GM13977 (cell line): ENCODE measurements at regions of chr3 and their contacts with region 1.

Region 1: DNA sequence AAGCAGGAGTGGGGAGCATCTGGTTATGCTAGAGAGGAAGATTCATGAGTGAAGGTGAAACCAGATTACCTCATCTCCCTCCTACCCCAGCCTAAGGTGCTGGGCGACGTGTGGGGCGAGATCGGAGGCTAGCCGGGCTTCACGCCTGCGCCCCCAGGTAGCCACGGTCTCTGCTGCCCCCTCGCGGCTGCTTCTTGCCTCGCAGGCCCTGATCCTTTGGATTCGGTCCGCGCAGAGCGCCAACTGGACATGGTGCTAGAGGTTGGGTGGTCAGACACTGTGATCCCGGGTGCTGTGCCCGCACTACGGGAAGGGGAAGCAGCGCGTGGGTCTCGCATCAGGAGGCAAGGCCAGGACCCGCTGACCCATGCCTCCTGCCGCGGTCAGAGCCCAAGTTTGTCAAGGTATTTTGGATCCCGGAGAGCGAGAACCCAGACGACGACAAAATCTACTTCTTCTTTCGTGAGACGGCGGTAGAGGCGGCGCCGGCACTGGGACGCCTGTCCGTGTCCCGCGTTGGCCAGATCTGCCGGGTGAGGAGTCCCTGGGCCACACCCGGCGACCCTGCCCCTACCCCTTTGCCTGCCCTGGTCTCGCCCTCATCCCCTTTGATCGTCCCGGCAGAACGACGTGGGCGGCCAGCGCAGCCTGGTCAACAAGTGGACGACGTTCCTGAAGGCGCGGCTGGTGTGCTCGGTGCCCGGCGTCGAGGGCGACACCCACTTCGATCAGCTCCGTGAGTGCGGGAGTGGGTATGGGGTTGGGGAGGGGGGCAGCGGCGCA is 4.2 kb downstream of the SEMA3B start:
- DNase-seq: peak; percentile 99
- CTCF ChIP-seq: peak; percentile 98

Region 2: DNA sequence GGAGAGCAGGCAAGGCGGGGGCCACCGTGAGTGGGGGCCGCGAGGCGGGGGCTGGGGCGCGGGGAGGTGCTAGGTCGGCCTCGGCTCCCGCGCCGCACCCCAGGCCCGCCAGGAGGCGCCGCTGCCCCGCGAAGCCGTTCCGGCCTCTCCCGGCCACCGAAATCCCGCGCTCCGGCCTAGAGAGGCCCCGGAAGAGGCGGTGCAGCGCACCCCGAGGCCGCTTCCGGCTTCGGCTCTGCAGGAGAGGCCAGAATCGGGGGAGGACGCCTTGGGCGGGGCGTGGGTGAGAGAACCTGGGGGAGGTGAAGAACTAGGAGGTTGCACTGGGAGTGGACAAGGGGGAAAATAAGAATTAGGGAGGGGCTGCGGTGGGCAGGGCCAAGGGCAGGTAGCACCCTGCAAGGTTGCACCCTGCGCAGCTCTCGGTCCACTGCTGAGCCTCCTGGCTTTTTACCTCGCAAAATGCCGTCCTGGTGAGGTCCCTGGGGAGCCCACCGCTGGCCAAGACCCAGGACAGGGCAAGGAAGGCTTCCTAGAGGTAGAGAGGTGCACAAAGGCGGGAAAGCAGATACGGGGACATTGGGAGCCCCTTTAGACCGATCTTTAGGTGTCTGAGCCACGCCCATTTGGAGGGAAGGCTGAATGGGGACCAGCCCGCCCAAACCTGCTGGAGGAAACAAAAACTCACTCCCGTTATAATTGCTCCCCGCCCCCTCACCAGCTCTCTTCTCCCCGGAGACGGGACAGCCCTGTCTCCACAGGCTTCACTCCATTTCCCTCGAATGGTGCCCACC is 45.5 kb before region 1 on chr3:
- in situ Hi-C with region 1: loop called (anchors 10 kb)
- DNase-seq: peak; percentile 95
- CTCF ChIP-seq: peak; percentile 91